A673 (cell line): ENCODE measurements at regions of chr20 and their contacts with region 1.

Region 1: GRCh38 chr20:57498425-57499400 is 26.2 kb downstream of the CTCFL start:
- DNase-seq: peak; percentile 46
- H3K4me3 ChIP-seq: no peak overlapping the region
- H3K27ac ChIP-seq: no peak overlapping the region
- H3K4me1 ChIP-seq: peaks cover 5% of the 10 kb centered on the region
- H3K27me3 ChIP-seq: peaks cover 7% of the 10 kb centered on the region
- CTCF ChIP-seq: peak; percentile 42

Region 2: DNA sequence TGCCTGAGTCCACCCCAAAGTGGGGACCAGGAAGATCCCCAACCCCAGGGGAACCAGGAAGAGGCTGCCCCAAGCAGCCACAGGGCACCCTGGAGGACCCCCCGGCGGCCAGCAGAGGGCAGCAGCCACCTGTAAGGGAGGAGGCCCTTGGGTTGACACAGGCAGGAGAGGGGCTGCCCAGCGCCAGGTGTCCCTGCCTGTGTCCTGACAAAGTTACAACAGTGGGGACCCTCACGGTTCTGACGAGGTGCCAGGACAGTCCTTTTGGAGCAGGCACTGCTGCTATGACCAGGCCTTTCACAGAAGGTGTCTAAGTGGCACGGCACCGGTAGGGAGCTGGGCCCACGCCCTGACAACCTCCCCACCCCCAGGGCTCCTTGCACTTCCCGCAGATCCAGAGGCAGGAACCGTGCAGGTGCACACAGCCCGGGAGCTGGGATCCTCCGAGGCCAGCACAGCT is 409.0 kb before region 1 on chr20:
- CTCF ChIA-PET with region 1: no interaction called
- POLR2A ChIA-PET with region 1: no interaction called
- intact Hi-C with region 1: loop called (anchors 5 kb)
- DNase-seq: peak; percentile 70
- H3K4me3 ChIP-seq: no peak overlapping the region
- H3K27ac ChIP-seq: no peak overlapping the region
- H3K4me1 ChIP-seq: no peaks in the 10 kb centered on the region
- H3K27me3 ChIP-seq: peaks cover 16% of the 10 kb centered on the region
- CTCF ChIP-seq: peak; percentile 86

Region 3: DNA sequence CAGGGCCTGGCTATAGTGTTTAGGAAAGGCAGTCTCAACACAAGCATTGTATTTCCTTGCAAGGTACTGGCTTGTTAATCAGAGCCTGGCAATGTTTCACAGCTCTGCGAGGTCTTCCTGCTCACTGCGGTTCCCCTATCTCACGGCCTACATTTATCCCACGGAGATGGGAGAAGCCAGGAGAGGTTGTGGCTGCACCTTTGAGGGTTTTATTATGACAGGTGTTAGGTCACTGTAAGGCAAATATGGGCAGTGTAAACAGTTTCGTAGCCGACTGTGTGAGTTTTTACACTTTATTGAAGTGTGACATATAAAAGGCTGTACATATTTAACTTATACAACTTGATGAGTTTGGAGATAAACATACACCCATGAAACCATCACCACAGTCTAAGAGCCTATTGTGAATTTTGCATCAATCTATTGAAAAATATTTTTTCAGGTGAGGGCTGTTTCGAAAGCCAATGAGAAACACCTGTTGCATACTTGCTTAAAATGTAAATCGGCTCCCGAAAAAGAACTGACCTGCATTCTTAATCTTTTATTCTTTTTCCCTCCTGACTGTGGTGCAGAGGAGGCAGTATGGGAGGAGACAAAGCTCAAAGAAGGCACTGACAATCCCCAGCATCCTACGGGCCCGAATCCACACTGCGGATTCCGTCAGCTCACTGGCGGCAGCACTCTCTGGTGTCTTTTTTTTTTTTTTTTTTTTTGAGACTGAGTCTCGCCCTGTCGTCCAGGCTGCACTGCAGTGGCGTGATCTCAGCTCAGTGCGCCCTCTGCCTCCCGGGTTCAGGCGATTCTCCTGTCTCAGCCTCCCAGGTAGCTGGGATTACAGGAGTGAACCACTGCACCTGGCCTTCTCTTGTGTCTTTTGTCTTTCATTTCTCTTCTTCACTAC is 115.0 kb before region 1 on chr20:
- CTCF ChIA-PET with region 1: interaction called, 4 read pairs
- POLR2A ChIA-PET with region 1: no interaction called
- intact Hi-C with region 1: loop called (anchors 1 kb)
- DNase-seq: no peak
- H3K4me3 ChIP-seq: no peak overlapping the region
- H3K27ac ChIP-seq: no peak overlapping the region
- H3K4me1 ChIP-seq: no peaks in the 10 kb centered on the region
- H3K27me3 ChIP-seq: no peaks in the 10 kb centered on the region
- CTCF ChIP-seq: no peak

Region 4: DNA sequence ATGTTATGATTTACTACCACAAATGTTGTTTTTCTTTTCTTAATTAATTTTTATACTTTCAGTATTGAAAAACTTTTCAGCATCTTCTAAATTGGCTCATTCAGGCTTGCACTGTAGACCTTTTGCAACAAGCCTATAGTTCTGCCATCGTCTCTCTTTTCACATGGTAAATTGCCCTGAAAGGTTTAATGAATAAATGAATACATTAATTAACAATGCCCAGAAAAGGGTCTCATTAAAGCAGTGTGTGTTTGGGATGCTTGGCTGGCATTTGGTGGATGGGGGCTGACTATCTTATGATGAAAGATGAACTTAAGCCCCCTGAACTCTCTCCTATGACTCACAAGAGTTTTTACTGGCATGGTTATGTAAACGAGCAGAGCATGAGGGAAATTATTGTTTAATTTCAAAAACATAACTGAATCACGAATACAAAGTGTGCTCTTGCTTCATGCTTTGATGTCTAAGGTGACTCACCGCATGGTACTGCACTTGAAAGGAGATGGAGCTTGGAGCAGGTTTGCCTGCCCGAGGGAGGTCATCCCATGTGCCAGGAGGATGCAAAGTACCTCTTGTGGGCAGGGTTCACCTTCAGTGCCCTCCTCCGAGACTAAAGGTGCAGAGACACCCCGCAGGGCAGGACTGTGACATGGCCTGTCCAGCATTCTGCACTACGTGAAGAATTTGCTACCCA is 48.4 kb after region 1 on chr20:
- CTCF ChIA-PET with region 1: interaction called, 10 read pairs
- POLR2A ChIA-PET with region 1: no interaction called
- intact Hi-C with region 1: no loop called
- DNase-seq: no peak
- H3K4me3 ChIP-seq: no peak overlapping the region
- H3K27ac ChIP-seq: no peak overlapping the region
- H3K4me1 ChIP-seq: no peaks in the 10 kb centered on the region
- H3K27me3 ChIP-seq: no peaks in the 10 kb centered on the region
- CTCF ChIP-seq: no peak